ENCODE measurements at regions of chr17 and their contacts with region 1.

Region 1: DNA sequence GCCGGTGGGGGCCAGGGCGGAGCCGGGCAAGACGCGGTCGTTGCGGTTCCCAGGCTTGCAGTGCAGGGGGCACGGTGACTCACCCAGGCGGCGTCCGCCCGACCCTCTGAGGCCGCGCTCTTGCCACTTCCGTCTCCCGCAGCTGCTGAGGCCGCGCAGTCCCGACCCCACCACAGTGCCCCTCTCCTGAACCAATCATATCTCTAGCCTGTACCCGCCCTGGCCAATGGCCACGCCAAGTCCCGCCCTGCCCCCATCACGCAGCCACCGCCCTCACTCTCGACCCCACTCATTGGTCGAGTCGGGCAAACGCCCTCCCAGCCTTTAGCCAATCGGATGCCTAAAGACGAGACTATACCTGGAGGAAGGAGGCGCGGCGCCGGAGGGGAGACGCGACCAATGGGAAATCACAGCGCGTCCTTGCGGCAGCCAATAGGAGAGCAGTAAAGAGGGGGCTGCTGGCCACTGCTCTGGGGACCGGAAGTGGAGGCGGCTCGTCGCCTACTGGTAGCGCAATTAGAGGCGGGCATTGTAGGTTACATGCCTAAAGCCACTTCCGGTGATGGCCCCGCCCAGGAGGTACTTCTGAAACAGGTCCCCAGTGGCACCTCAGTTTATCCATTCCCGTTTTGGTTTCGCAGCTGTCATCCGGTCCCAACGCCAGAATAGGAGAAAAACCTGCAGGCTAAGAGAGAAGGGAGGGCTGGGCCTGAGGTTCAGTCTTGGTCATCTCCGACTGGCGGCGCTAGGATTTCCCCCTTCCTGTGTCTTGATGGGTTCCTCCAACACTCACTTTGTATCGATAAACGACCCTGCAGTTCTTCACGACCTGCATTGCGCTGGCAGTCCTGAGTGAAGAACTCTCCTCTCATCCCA is 3.5 kb upstream of the MTMR4 start:
- DNase-seq: peak; percentile 100
- H3K4me3 ChIP-seq: peak overlapping the region; percentile 65 to 79 (median 78)
- H3K27ac ChIP-seq: peak overlapping the region; percentile 93 to 99 (median 94)
- H3K4me1 ChIP-seq: peaks cover 33 to 63% (median 60%) of the 10 kb centered on the region in 4 donors
- H3K27me3 ChIP-seq: no peaks in the 10 kb centered on the region
- CTCF ChIP-seq: no peak
- EP300 ChIP-seq: peak; percentile 6
- POLR2A ChIP-seq: no peak

Region 2: GRCh38 chr17:58352014-58352842 is 165.7 kb before region 1 on chr17 and contains the start of gene SUPT4H1:
- intact Hi-C with region 1: loop called (anchors 10 kb)
- DNase-seq: peak; percentile 98
- H3K4me3 ChIP-seq: peak within 1 kb of the TSS; percentile 78 to 94 (median 81)
- H3K27ac ChIP-seq: peak within 1 kb of the TSS; percentile 89 to 97 (median 94)
- H3K4me1 ChIP-seq: peaks cover 11 to 30% (median 20%) of the 10 kb centered on the region in 4 donors
- H3K27me3 ChIP-seq: no peaks in the 10 kb centered on the region
- CTCF ChIP-seq: peak in 1 of 3 experiments; percentile 22
- EP300 ChIP-seq: no peak
- POLR2A ChIP-seq: peak; percentile 82
- total RNA-seq, gene SUPT4H1: 35.3 to 59.6 (median 47.0) TPM

Region 3: DNA sequence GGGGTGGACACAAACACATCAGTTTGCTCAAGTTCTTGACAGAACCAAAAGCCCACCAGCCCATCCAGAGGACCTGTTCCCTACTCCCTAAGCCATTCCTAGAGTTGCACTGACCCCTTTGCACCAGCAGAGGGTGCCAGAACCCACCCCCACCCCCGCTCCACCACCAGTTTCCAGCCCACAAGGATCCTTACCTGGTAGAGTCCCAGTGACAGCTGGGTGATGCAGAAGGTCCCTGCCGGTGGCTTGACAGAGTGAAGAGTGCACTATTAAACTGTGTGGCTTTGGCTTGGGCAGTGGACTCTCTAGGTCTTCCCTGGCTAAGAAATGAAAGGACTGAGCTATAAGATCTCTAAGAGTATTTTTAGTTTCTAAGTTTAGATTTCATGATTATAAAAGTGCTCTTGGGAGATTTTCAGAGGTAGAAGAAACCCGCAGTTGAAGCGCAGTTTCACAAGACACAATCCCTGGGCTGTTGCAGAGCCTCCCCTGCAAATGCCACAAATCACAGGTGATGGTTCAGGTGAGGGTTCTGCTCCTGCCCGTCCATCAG is 69.8 kb after region 1 on chr17:
- intact Hi-C with region 1: loop called (anchors 5 kb)
- DNase-seq: no peak
- H3K4me3 ChIP-seq: no peak overlapping the region
- H3K27ac ChIP-seq: no peak overlapping the region
- H3K4me1 ChIP-seq: no peaks in the 10 kb centered on the region
- H3K27me3 ChIP-seq: no peaks in the 10 kb centered on the region
- CTCF ChIP-seq: peak; percentile 80 to 98 (median 84)
- EP300 ChIP-seq: no peak
- POLR2A ChIP-seq: no peak

Region 4: GRCh38 chr17:58601976-58602375 is 84.0 kb after region 1 on chr17:
- intact Hi-C with region 1: no loop called
- DNase-seq: no peak
- H3K4me3 ChIP-seq: no peak overlapping the region
- H3K27ac ChIP-seq: no peak overlapping the region
- H3K4me1 ChIP-seq: no peaks in the 10 kb centered on the region
- H3K27me3 ChIP-seq: no peaks in the 10 kb centered on the region
- CTCF ChIP-seq: no peak
- EP300 ChIP-seq: no peak
- POLR2A ChIP-seq: no peak

Region 5: GRCh38 chr17:58631523-58632323 is 113.8 kb after region 1 on chr17:
- intact Hi-C with region 1: loop called (anchors 5 kb)
- DNase-seq: peak; percentile 98
- H3K4me3 ChIP-seq: peak overlapping the region; percentile 45 to 58 (median 52)
- H3K27ac ChIP-seq: peak overlapping the region; percentile 75 to 86 (median 82)
- H3K4me1 ChIP-seq: peaks cover 8 to 13% (median 12%) of the 10 kb centered on the region in 4 donors
- H3K27me3 ChIP-seq: no peaks in the 10 kb centered on the region
- CTCF ChIP-seq: peak in 2 of 3 experiments; percentile 21 to 28
- EP300 ChIP-seq: no peak
- POLR2A ChIP-seq: peak; percentile 98

Region 6: GRCh38 chr17:59004338-59005111 is 486.6 kb after region 1 on chr17:
- intact Hi-C with region 1: loop called (anchors 2 kb)
- DNase-seq: no peak
- H3K4me3 ChIP-seq: no peak overlapping the region
- H3K27ac ChIP-seq: no peak overlapping the region
- H3K4me1 ChIP-seq: no peaks in the 10 kb centered on the region
- H3K27me3 ChIP-seq: no peaks in the 10 kb centered on the region
- CTCF ChIP-seq: peak; percentile 92 to 94 (median 93)
- EP300 ChIP-seq: no peak
- POLR2A ChIP-seq: no peak

Region 7: DNA sequence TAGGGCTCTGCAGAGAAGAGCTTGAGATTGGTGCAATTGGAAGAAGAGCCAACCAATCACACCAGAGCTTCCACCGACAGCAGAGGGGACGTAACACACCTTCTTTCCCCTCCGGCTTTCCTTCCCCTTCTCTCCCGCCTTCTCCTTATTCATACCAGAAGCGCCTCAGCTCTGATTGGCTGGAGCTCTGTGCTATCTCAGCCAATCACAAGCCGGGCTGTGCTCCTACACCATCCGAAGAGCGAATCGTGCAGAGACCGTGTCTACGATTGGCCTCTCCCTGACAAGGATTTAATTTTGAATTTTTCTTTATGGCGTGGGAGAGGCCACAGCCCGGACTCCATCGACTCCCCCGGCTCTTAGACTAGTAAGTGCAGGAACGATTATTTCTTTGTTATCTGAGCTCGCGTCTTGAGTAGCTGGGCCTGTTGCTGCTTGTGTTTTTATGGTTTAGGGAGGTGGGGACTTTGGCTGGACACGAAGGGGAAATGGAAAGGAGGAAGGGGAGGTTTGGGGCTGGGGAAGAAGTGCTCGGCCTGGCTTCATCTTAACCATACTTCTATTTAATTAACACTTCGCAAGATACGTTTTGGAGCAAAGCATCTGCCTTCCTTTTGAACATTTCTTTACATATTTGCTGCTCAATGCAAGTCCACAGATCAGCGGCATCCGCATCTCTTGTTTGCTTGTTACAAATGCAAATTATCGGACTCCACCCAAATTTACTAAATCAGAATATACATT is 637.6 kb after region 1 on chr17 and contains the start of gene PRR11:
- intact Hi-C with region 1: loop called (anchors 10 kb)
- DNase-seq: peak; percentile 99
- H3K4me3 ChIP-seq: peak within 1 kb of the TSS; percentile 66 to 77 (median 74)
- H3K27ac ChIP-seq: peak within 1 kb of the TSS; percentile 80 to 92 (median 86)
- H3K4me1 ChIP-seq: peaks cover 21 to 37% (median 31%) of the 10 kb centered on the region in 4 donors
- H3K27me3 ChIP-seq: no peaks in the 10 kb centered on the region
- CTCF ChIP-seq: no peak
- EP300 ChIP-seq: no peak
- POLR2A ChIP-seq: no peak
- total RNA-seq, gene PRR11: 0.32 to 110 (median 0.87) TPM

Measured in esophagus muscularis mucosa (tissue), 4 donors.